Dendritic cell treated with granulocyte-macrophage colony-stimulating factor and Interleukin-4, amounts not matched to agents 40 ng/mL and 50 ng/mL, for 4 days (primary cell): ENCODE measurements at regions of chr19 and their contacts with region 1.

Region 1: GRCh38 chr19:54390942-54391577 is 24.2 kb upstream of the TTYH1 start:
- H3K4me3 Mint-ChIP-seq: peak overlapping the region; percentile 44
- H3K27ac Mint-ChIP-seq: peak overlapping the region; percentile 92
- H3K4me1 Mint-ChIP-seq: peaks cover 56% of the 10 kb centered on the region
- H3K27me3 Mint-ChIP-seq: peaks cover 7% of the 10 kb centered on the region

Region 2: DNA sequence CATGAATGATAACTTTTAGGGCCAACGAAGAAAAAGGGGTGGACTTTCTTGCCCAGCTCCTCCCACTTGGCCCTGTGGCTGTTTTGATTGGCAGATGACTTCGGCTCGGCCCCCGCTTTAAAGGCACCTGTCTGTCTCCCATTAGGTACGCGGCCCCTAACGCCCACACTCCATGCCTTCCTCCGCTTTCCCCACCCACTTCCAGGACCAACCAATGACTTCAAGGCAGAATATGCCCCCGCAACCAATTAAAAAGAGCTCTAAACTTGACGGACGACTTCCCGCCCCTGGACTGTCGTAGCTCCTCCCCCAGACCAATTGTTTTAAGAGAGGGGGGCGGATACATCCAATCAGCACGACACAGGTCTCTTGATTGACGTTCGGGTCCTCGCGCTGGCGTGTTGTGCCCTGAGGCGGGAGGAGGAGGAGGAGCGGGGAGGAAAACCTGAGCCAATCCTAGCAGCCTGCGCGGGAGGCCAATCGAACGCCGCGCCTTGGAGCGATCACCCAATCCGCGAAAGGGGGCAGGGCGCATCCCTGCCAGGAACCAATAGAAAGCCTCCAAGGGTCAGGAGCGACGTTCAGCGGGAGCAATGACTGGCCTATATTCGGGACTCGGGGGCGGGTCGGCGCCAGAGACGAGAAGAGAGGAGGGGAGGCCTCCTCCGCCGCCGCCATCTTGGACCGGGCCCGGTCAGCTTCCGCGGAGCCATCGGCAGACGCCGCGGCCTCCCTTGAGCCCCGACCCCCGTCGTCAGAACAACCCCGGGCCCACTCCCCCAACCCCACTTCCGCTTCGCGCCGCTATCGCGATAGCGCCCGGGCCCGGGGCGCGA is 253.8 kb before region 1 on chr19 and contains the start of gene CNOT3:
- intact Hi-C with region 1: no loop called
- H3K4me3 Mint-ChIP-seq: peak within 1 kb of the TSS; percentile 87
- H3K27ac Mint-ChIP-seq: peak within 1 kb of the TSS; percentile 90
- H3K4me1 Mint-ChIP-seq: peaks cover 52% of the 10 kb centered on the region
- H3K27me3 Mint-ChIP-seq: peaks cover 9% of the 10 kb centered on the region

Region 3: GRCh38 chr19:54209811-54210494 is 181.1 kb before region 1 on chr19:
- intact Hi-C with region 1: loop called (anchors 10 kb)
- H3K4me3 Mint-ChIP-seq: peak overlapping the region; percentile 61
- H3K27ac Mint-ChIP-seq: peak overlapping the region; percentile 94
- H3K4me1 Mint-ChIP-seq: peaks cover 80% of the 10 kb centered on the region
- H3K27me3 Mint-ChIP-seq: no peaks in the 10 kb centered on the region

Region 4: DNA sequence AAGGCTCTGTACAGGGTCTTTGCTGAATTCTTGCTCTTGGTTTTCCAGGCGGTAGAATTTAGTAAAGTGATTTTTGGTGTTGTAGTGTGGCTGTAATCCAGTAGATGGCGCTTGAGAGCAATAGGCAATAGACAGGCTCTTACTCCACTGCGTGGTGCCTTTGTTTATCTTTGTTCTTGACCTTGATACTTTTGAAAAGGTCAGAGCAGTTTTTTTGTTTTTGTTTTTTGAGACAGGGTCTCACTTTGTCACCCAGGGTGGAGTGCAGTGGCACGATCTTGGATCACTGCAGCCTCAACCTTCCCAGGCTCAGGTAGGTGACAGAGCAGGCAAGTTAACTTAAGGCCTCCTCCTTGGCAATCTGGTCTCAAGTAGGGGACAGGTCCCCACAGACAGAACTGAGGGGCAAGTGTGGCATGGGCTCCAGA is 65.9 kb before region 1 on chr19:
- intact Hi-C with region 1: loop called (anchors 1 kb)
- H3K4me3 Mint-ChIP-seq: no peak overlapping the region
- H3K27ac Mint-ChIP-seq: peak overlapping the region; percentile 67
- H3K4me1 Mint-ChIP-seq: peaks cover 41% of the 10 kb centered on the region
- H3K27me3 Mint-ChIP-seq: peaks cover 11% of the 10 kb centered on the region

Region 5: DNA sequence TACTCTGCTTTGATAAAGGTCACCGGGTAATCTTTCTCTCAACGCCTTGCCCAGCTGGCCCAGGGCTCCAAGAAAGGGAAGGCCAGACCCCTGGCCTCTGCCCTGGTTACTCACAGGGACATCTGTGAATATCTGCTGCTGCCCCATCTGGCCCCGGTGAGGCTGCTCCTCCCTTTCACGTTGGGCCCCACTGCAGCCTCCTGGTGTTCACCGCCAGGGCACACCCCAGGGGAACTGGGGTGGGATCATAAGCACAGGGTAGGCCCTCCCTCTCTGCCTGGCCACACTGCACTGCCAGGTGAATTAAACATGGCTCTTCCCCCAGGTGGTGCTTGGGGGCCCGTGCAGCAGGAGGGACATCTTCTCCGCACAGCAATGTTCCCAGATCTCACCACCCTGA is 39.0 kb before region 1 on chr19:
- intact Hi-C with region 1: loop called (anchors 5 kb)
- H3K4me3 Mint-ChIP-seq: no peak overlapping the region
- H3K27ac Mint-ChIP-seq: peak overlapping the region; percentile 58
- H3K4me1 Mint-ChIP-seq: peaks cover 64% of the 10 kb centered on the region
- H3K27me3 Mint-ChIP-seq: peaks cover 28% of the 10 kb centered on the region

Region 6: DNA sequence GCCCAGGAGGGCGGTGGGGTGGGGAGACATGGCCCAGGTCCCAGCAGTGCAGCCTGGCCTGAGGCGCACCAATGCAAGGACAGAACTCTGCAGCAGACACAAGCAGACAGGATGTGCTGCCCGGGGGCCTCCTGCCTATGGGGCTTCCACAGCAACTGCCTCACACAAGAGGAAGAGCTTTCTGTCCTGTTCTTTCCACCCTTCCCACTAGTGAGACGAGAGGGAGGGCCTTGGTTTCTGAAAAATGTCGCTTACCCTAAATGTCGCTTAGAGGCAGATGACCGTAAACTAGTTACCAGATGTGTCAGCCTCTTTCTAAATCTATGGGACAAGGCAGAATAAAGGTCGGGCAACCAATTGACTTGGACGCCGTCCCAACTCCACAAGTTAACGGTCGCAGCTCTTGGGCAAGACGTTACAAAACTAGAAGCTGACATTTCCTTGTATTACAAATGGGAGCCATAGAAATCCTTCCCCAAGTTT is 26.2 kb before region 1 on chr19 and contains the start of gene LAIR1:
- intact Hi-C with region 1: loop called (anchors 2 kb)
- H3K4me3 Mint-ChIP-seq: peak within 1 kb of the TSS; percentile 96
- H3K27ac Mint-ChIP-seq: peak within 1 kb of the TSS; percentile 97
- H3K4me1 Mint-ChIP-seq: peaks cover 61% of the 10 kb centered on the region
- H3K27me3 Mint-ChIP-seq: peaks cover 6% of the 10 kb centered on the region

Region 7: DNA sequence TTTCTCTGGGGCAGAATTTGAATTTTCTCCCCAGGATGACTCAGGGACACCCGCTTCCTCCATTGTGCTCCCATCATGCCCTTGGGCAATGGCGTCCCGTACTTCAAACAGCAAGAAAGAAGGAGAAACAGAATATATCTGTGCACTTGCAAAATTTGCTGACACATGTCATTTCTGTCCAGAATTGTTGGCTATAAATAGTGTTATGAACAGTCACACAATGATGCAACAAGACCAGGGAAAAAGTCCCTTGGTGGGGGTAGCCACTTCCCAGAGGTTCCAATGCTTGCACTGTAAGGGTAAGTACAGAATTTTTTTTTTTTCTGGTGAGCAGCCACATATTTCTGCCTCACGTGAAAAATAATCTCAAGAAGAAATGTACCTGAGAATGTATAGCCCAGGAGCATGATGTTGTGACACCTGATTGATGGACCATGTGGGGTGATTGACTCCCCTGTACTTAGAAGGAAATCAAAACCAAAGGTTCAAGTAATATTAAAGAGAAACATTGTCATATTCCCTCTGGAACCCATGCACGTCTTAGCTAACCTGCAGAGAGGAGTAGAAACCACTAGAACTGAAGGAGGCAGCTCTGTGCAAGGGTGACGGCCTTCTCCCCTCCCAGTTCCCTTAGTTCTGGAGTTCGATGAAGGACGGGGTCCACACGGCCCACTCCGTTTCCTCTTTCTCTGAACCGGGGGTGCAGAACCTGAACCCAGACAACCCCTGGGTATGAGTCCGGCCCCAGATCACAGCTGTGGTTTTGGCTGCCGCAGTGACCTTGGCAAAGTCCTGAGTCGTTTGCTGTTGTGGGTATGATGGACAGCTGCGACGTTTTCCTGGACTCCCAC is 17.1 kb before region 1 on chr19:
- intact Hi-C with region 1: loop called (anchors 2 kb)
- H3K4me3 Mint-ChIP-seq: peak overlapping the region; percentile 81
- H3K27ac Mint-ChIP-seq: peak overlapping the region; percentile 99
- H3K4me1 Mint-ChIP-seq: peaks cover 77% of the 10 kb centered on the region
- H3K27me3 Mint-ChIP-seq: peaks cover 4% of the 10 kb centered on the region